ENCODE measurements at regions of chr2 and their contacts with region 1.

Region 1: DNA sequence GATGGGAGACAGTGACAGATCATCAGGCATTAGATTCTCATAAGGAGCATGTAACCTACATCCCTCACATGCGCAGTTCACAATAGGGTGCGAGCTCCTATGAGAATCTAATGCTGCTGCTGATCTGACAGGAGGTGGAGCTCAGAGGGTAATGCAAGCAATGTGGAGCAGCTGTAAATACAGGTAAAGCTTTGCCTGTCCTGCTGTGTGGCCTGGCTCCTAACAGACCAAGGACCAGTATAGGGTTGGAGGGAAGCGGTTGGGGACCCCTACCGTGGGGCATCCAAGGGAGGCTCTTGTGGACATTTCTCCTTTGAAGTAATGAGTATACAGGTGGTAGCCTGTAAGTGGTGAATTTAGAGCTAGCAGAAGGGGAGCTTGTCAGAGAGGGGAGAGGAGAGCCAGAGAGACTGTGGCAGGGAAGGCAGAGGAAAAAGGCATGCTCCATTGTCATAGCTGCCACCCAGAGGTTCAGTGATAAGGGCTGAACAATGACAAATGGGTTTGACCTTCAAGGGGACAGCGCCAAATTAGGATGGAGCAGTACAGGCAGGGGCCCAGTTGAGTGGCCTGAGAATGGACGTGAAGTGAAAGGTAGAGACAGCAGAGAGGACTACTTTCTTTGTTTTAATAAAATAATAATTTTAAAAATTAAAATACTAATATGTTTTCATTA is 15.2 kb upstream of the TMBIM1 start:
- DNase-seq: no peak
- H3K4me3 ChIP-seq: no peak overlapping the region
- H3K4me3 Mint-ChIP-seq: no peak overlapping the region
- H3K27ac ChIP-seq: no peak overlapping the region
- H3K27ac Mint-ChIP-seq: peak overlapping the region in 2 of 7 donors; percentile 15 to 35
- H3K4me1 ChIP-seq: peaks cover 19 to 32% of the 10 kb centered on the region in 2 donors
- H3K4me1 Mint-ChIP-seq: peaks cover 33% of the 10 kb centered on the region
- H3K27me3 ChIP-seq: no peaks in the 10 kb centered on the region
- H3K27me3 Mint-ChIP-seq: peaks cover 0 to 1% (median 0%) of the 10 kb centered on the region in 3 donors
- CTCF ChIP-seq: no peak

Region 2: DNA sequence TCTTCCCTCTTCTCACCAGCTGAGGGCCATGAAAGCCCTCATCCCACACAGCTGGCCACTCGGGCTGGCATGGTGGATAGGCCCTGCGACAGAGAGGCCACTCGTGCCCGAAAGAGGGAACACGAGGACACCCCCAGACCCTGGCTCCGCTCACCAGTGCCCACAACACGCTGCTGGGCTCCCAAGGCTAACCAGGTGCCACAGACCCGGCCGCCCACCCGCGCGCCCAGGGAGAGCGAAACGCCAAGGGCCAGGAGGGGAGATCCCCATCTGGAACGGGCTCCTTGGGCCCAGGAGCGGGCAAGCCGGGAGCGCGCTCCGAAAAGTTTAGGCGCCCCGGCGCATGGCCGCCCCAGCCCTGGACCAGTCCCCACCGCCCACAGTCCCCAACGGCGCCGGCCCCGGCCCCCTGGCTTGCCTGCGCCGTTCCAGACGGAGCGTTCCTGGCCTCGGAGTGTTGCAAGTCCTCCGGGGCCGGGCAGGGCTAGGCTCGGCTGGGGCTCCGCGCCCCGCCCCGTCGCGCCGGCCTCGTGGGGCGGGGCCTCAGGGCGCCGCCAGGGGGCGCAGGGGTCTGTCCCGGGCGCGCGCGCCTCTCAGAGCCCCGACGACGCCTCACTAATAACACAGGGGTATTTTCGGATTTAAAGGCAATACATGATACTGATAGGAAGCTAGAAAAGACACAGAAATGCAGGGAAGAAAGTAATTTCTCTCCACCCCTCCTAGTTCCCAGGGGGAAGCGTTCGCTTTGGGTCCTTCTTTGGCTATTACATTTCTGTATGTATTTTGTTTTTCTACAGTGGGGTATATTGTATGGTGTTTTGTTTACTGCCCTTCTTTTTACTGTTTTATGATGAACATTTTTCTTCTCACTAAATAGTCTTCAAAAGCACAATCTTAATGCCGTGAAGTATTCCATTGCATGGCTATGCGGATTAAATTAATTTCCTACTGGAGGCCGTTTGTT is 15.2 kb before region 1 on chr2 and contains the start of gene TMBIM1:
- intact Hi-C with region 1: no loop called
- DNase-seq: peak; percentile 71 to 84 (median 83)
- H3K4me3 ChIP-seq: peak within 1 kb of the TSS; percentile 70 to 90 (median 83)
- H3K4me3 Mint-ChIP-seq: peak within 1 kb of the TSS; percentile 92 to 97
- H3K27ac ChIP-seq: peak within 1 kb of the TSS; percentile 94 to 96
- H3K27ac Mint-ChIP-seq: peak within 1 kb of the TSS; percentile 96 to 99 (median 98)
- H3K4me1 ChIP-seq: peaks cover 65 to 74% of the 10 kb centered on the region in 2 donors
- H3K4me1 Mint-ChIP-seq: peaks cover 64% of the 10 kb centered on the region
- H3K27me3 ChIP-seq: no peaks in the 10 kb centered on the region
- H3K27me3 Mint-ChIP-seq: peaks cover 0 to 2% (median 0%) of the 10 kb centered on the region in 3 donors
- CTCF ChIP-seq: peak; percentile 98
- polyA plus RNA-seq, gene TMBIM1: 101 to 139 (median 129) TPM

Region 3: DNA sequence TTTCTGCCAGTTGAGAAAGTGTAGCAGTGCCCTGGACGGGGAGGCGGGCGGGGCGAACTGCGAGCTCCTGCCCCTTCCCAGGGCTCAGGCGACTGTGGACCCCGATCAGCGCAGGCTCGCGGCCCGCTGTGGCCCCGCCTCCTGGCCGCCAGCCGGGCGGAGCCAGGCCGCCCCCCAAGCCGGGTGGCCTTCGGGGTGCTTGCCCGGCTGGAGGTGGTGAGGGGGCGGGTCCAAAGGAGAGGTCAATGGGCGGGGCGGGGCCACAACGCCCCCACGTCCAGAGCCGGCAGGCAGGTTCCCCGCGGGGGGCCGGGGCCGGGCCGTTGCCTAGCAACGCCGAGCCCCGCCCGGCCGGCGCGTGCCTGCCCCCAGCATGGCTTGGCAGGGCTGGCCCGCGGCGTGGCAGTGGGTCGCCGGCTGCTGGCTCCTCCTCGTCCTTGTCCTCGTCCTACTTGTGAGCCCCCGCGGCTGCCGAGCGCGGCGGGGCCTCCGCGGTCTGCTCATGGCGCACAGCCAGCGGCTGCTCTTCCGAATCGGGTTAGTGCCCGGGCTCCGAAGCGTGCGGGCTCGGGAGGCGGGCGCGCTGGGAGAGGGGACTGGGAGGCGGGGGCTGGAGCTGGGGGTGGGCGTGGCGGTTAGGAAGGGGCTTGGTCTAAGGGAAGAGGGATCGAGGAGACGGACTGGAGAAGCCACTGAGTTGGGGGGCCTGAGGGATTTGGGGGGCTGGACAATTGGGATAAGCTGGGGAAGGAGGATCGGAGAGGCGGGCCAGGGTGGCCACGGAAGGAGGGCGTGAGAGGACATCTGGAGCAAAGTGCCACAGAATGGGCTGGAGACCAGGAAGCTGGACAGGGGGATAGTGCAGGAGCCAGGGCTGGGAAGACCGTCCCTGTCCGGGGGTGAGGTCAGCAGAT is 15.6 kb after region 1 on chr2:
- intact Hi-C with region 1: loop called in 1 of 2 experiments (anchors 2 kb)
- DNase-seq: peak; percentile 53 to 62 (median 58)
- H3K4me3 ChIP-seq: peak overlapping the region; percentile 78 to 95 (median 94)
- H3K4me3 Mint-ChIP-seq: peak overlapping the region; percentile 95 to 99
- H3K27ac ChIP-seq: peak overlapping the region; percentile 91 to 94
- H3K27ac Mint-ChIP-seq: peak overlapping the region; percentile 91 to 98 (median 97)
- H3K4me1 ChIP-seq: peaks cover 77 to 84% of the 10 kb centered on the region in 2 donors
- H3K4me1 Mint-ChIP-seq: peaks cover 80% of the 10 kb centered on the region
- H3K27me3 ChIP-seq: no peaks in the 10 kb centered on the region
- H3K27me3 Mint-ChIP-seq: peaks cover 0 to 6% (median 0%) of the 10 kb centered on the region in 3 donors
- CTCF ChIP-seq: no peak

Region 4: DNA sequence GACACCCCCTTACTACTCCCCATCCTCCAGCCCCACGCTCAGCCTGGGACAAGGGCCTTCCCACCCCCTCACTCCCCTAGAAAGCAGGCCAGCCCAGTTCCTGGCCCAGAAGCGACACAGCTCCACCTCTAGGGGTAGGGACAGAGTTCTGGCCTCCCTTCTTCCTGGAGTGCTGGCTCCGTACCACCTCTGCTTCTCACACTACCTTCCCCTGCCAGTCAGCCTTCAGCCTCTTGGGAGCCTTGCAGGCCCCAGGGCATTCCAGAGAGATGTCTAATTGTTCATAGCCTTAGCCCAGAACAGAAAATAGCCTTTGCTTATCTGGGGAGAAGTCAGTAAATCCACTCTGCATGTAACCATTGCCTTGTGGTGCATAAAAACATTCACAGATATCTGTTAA is 36.0 kb after region 1 on chr2:
- intact Hi-C with region 1: no loop called
- DNase-seq: no peak
- H3K4me3 ChIP-seq: no peak overlapping the region
- H3K4me3 Mint-ChIP-seq: no peak overlapping the region
- H3K27ac ChIP-seq: no peak overlapping the region
- H3K27ac Mint-ChIP-seq: peak overlapping the region in 1 of 7 donors; percentile 42
- H3K4me1 ChIP-seq: no peaks in the 10 kb centered on the region
- H3K4me1 Mint-ChIP-seq: no peaks in the 10 kb centered on the region
- H3K27me3 ChIP-seq: no peaks in the 10 kb centered on the region
- H3K27me3 Mint-ChIP-seq: peaks cover 0 to 1% (median 0%) of the 10 kb centered on the region in 3 donors
- CTCF ChIP-seq: no peak

Region 5: DNA sequence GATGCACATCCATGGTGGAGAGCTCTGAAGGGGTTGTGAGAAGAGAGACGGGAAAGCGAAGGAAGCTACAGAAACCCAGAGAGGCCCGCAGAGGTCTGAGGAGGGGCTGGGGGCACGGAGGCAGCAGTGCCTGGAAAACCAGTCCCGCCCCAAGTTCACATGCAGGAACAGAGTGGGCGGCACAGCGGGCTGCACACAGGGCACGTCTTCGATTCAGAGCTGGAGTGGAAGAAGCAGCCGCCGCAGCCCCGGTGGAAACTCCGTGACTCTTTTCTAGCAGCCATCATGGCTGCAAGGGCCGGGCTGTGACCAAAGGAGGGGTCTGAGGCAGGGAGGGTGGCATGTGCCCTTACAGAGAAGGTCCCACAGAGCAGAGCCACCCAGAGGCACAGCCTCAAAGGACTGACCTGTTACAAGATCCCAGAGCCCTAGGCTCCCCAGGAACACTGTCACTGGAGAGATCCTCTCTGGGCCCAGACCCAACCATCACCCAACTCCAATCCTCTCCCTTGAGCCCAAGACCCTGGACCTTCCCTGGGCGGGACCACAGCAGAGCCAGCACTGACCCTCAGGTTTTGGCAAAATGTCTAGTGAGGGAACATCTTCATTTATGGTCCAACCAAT is 513.3 kb after region 1 on chr2:
- intact Hi-C with region 1: no loop called
- DNase-seq: no peak
- H3K4me3 ChIP-seq: no peak overlapping the region
- H3K4me3 Mint-ChIP-seq: peak overlapping the region in 1 of 2 donors; percentile 19
- H3K27ac ChIP-seq: peak overlapping the region; percentile 53 to 68
- H3K27ac Mint-ChIP-seq: peak overlapping the region; percentile 81 to 96 (median 93)
- H3K4me1 ChIP-seq: peaks cover 22 to 25% of the 10 kb centered on the region in 2 donors
- H3K4me1 Mint-ChIP-seq: peaks cover 47% of the 10 kb centered on the region
- H3K27me3 ChIP-seq: peaks cover 0 to 2% of the 10 kb centered on the region in 2 donors
- H3K27me3 Mint-ChIP-seq: peaks cover 5 to 23% (median 11%) of the 10 kb centered on the region in 3 donors
- CTCF ChIP-seq: no peak